GM12878 (cell line): ENCODE measurements at regions of chr20 and their contacts with region 1.

Region 1: DNA sequence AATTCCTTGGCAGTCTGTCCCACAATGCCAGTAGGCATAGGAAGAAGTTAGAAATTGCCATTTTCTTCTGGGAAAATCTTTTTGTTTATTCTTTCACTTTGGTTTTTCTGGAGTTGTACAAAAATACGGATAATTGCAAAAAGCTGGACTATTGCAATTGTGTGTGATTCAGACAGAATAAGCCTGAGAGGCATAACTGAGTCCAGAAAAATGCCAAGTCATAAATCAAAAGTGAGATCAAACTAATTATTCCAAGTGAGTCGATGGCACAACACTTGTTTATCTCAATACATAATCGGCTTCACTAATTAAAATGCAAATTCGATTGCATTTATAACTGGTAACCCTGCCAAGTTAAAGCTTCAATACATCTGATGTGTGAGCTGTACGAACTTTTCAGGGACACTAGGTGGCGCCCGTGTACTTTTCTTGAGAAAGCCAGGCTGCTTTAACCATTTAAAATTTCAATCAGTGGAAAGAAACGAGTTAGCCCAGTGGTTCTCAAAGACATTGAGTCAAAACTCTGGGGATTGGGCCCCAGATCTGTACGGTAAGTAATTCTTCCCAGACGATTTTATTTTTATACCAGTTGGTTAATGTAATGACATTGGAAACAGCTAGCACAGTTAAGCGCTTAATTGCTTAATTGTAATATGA is 102.6 kb downstream of the LAMP5 start:
- DNase-seq: no peak
- ATAC-seq: peak; percentile 87
- H3K4me3 ChIP-seq: no peak overlapping the region
- H3K27ac ChIP-seq: no peak overlapping the region
- H3K4me1 ChIP-seq: peaks cover 18% of the 10 kb centered on the region
- H3K27me3 ChIP-seq: no peaks in the 10 kb centered on the region
- CTCF ChIP-seq: peak; percentile 74 to 84 (median 80)
- EP300 ChIP-seq: no peak
- POLR2A ChIP-seq: no peak
- RAD21 ChIP-seq: peak; percentile 94

Region 2: DNA sequence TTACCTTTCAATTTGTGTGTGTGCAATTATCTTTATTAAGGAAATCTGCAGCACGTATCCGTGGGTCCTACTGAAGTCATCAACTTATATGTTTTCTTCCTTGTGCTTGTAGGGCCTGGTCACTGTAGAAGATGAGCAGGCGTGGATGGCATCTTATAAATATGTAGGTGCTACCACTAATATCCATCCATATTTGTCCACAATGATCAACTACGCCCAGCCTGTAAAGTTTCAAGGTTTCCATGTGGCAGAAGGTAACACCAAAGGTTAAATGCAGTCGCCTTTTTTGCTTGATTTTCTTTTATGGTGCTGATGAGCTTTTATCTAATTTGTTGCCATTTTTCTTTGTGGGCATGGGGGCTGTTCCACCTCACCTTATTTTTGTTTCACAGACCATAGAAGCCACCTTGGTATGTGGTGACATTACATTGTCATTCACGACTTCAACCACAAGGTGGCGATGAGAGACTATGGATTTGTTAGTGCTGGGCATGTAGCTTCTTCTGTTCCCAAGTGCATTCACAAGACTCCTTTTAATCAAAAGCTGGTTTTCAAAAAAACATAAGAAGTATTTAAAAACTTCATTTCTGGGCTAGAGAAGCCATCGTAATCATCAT is 209.0 kb before region 1 on chr20:
- CTCF ChIA-PET with region 1: interaction called, 235 read pairs
- POLR2A ChIA-PET with region 1: no interaction called
- RAD21 ChIA-PET with region 1: interaction called, 13 read pairs
- SMC1A ChIA-PET with region 1: interaction called, 15 read pairs
- in situ Hi-C with region 1: no loop called
- intact Hi-C with region 1: no loop called
- DNase-seq: peak; percentile 53
- ATAC-seq: peak; percentile 94
- H3K4me3 ChIP-seq: no peak overlapping the region
- H3K27ac ChIP-seq: no peak overlapping the region
- H3K4me1 ChIP-seq: peaks cover 13% of the 10 kb centered on the region
- H3K27me3 ChIP-seq: no peaks in the 10 kb centered on the region
- CTCF ChIP-seq: peak; percentile 74 to 85 (median 85)
- EP300 ChIP-seq: no peak
- POLR2A ChIP-seq: no peak
- RAD21 ChIP-seq: peak; percentile 94

Region 3: GRCh38 chr20:9705722-9706476 is 88.9 kb after region 1 on chr20:
- CTCF ChIA-PET with region 1: no interaction called
- POLR2A ChIA-PET with region 1: no interaction called
- RAD21 ChIA-PET with region 1: no interaction called
- SMC1A ChIA-PET with region 1: no interaction called
- in situ Hi-C with region 1: no loop called
- intact Hi-C with region 1: no loop called
- DNase-seq: no peak
- ATAC-seq: no peak
- H3K4me3 ChIP-seq: no peak overlapping the region
- H3K27ac ChIP-seq: no peak overlapping the region
- H3K4me1 ChIP-seq: no peaks in the 10 kb centered on the region
- H3K27me3 ChIP-seq: no peaks in the 10 kb centered on the region
- CTCF ChIP-seq: no peak
- EP300 ChIP-seq: no peak
- POLR2A ChIP-seq: no peak
- RAD21 ChIP-seq: no peak

Region 4: GRCh38 chr20:9912858-9913434 is 296.0 kb after region 1 on chr20:
- CTCF ChIA-PET with region 1: interaction called, 83 read pairs
- POLR2A ChIA-PET with region 1: no interaction called
- RAD21 ChIA-PET with region 1: interaction called, 23 read pairs
- SMC1A ChIA-PET with region 1: interaction called, 14 read pairs
- in situ Hi-C with region 1: loop called (anchors 5 kb)
- intact Hi-C with region 1: loop called (anchors 2 kb)
- DNase-seq: no peak
- ATAC-seq: peak; percentile 42; the same call in 2 of the 3 replicates
- H3K4me3 ChIP-seq: no peak overlapping the region
- H3K27ac ChIP-seq: no peak overlapping the region
- H3K4me1 ChIP-seq: no peaks in the 10 kb centered on the region
- H3K27me3 ChIP-seq: no peaks in the 10 kb centered on the region; a peak in 1 of 4 replicates
- CTCF ChIP-seq: peak; percentile 70 to 79 (median 74)
- EP300 ChIP-seq: no peak
- POLR2A ChIP-seq: no peak
- RAD21 ChIP-seq: peak; percentile 47

Region 5: GRCh38 chr20:9978397-9979004 is 361.5 kb after region 1 on chr20:
- CTCF ChIA-PET with region 1: interaction called, 16 read pairs
- POLR2A ChIA-PET with region 1: no interaction called
- RAD21 ChIA-PET with region 1: interaction called, 15 read pairs
- SMC1A ChIA-PET with region 1: interaction called, 4 read pairs
- in situ Hi-C with region 1: no loop called
- intact Hi-C with region 1: no loop called
- DNase-seq: peak; percentile 41
- ATAC-seq: peak; percentile 97
- H3K4me3 ChIP-seq: no peak overlapping the region
- H3K27ac ChIP-seq: no peak overlapping the region
- H3K4me1 ChIP-seq: no peaks in the 10 kb centered on the region
- H3K27me3 ChIP-seq: no peaks in the 10 kb centered on the region; a peak in 1 of 4 replicates
- CTCF ChIP-seq: peak; percentile 61 to 94 (median 79)
- EP300 ChIP-seq: no peak
- POLR2A ChIP-seq: no peak
- RAD21 ChIP-seq: peak; percentile 96

Region 6: GRCh38 chr20:10090588-10091166 is 473.7 kb after region 1 on chr20:
- CTCF ChIA-PET with region 1: interaction called, 31 read pairs
- POLR2A ChIA-PET with region 1: no interaction called
- RAD21 ChIA-PET with region 1: interaction called, 14 read pairs
- SMC1A ChIA-PET with region 1: interaction called, 14 read pairs
- in situ Hi-C with region 1: loop called (anchors 5 kb)
- intact Hi-C with region 1: loop called (anchors 1 kb)
- DNase-seq: no peak
- ATAC-seq: peak; percentile 92
- H3K4me3 ChIP-seq: no peak overlapping the region
- H3K27ac ChIP-seq: no peak overlapping the region
- H3K4me1 ChIP-seq: no peaks in the 10 kb centered on the region
- H3K27me3 ChIP-seq: no peaks in the 10 kb centered on the region
- CTCF ChIP-seq: peak; percentile 69 to 74 (median 69)
- EP300 ChIP-seq: no peak
- POLR2A ChIP-seq: no peak
- RAD21 ChIP-seq: peak; percentile 65

Region 7: DNA sequence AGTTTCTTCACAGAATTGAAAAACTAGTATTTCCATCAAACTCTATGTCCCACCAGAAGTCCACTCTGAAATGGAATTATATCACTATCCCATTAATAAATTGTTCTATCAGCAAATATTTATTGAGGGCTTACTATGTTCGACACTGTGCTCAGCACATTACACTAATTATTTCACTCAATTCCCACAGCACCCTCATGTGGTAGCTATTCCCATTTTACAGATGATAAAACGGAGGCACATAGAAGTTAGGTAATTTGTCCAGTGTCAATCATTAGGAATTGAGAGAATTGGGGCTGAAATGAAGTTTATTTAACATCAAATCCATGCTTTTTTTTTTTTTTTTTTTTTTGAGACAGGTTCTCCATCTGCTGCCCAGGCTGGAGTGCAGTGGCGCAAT is 764.5 kb after region 1 on chr20:
- CTCF ChIA-PET with region 1: interaction called, 12 read pairs
- POLR2A ChIA-PET with region 1: no interaction called
- RAD21 ChIA-PET with region 1: interaction called, 4 read pairs
- SMC1A ChIA-PET with region 1: interaction called, 4 read pairs
- in situ Hi-C with region 1: no loop called
- intact Hi-C with region 1: no loop called
- DNase-seq: no peak
- ATAC-seq: peak; percentile 87
- H3K4me3 ChIP-seq: no peak overlapping the region
- H3K27ac ChIP-seq: no peak overlapping the region
- H3K4me1 ChIP-seq: no peaks in the 10 kb centered on the region
- H3K27me3 ChIP-seq: no peaks in the 10 kb centered on the region
- CTCF ChIP-seq: peak in 1 of 3 experiments; percentile 19; a peak in 2 of 6 replicates
- EP300 ChIP-seq: no peak
- POLR2A ChIP-seq: no peak
- RAD21 ChIP-seq: no peak

Region 8: GRCh38 chr20:10553326-10553984 is 936.5 kb after region 1 on chr20:
- CTCF ChIA-PET with region 1: no interaction called
- POLR2A ChIA-PET with region 1: no interaction called
- RAD21 ChIA-PET with region 1: no interaction called
- SMC1A ChIA-PET with region 1: no interaction called
- in situ Hi-C with region 1: no loop called
- intact Hi-C with region 1: loop called (anchors 10 kb)
- DNase-seq: no peak
- ATAC-seq: peak; percentile 77
- H3K4me3 ChIP-seq: no peak overlapping the region
- H3K27ac ChIP-seq: no peak overlapping the region
- H3K4me1 ChIP-seq: peaks cover 30% of the 10 kb centered on the region
- H3K27me3 ChIP-seq: no peaks in the 10 kb centered on the region
- CTCF ChIP-seq: peak; percentile 76 to 85 (median 83)
- EP300 ChIP-seq: no peak
- POLR2A ChIP-seq: no peak
- RAD21 ChIP-seq: peak; percentile 94